Heart right ventricle (tissue), 16 donors: ENCODE measurements at regions of chr5 and their contacts with region 1.

Region 1: DNA sequence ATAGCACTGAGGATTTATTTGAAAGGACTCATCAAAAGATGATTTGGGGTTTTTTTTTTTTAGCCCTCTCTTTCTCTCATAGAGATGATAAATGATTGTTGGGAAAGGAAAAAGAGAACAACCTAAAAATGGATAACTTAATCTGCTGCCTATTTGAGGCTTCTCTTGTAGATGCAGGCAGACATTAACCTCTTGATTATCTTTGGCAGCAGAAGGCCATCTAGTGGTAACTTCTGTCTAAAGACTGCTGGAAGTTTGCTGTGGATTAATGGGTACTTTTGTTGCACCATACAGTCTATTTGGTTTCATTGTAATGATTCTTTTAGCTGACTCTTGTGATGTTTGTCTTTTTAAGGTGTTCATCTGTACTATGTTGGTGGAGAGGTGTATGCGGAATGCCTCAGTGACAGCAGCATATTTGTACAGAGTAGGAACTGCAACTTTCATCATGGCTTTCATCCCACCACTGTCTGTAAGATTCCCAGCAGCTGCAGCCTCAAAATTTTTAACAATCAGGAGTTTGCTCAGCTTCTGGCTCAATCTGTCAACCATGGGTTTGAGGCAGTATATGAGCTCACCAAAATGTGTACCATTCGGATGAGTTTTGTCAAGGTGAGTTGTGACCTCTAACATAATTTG is 18.8 kb downstream of the SMIM32 start:
- DNase-seq: no peak
- ATAC-seq: peak in 5 of 8 donors; percentile 44 to 70 (median 64)
- H3K4me3 ChIP-seq: no peak overlapping the region
- H3K27ac ChIP-seq: no peak overlapping the region
- H3K4me1 ChIP-seq: peaks cover 0 to 18% (median 0%) of the 10 kb centered on the region in 9 donors
- H3K27me3 ChIP-seq: no peaks in the 10 kb centered on the region
- CTCF ChIP-seq: peak; percentile 50 to 80 (median 64)

Region 2: GRCh38 chr5:135944967-135945560 is 229.1 kb before region 1 on chr5:
- intact Hi-C with region 1: loop called (anchors 2 to 10 kb)
- DNase-seq: peak in 1 of 2 donors; percentile 68
- ATAC-seq: peak in 5 of 8 donors; percentile 55 to 76 (median 68)
- H3K4me3 ChIP-seq: no peak overlapping the region
- H3K27ac ChIP-seq: no peak overlapping the region
- H3K4me1 ChIP-seq: peaks cover 0 to 8% (median 0%) of the 10 kb centered on the region in 9 donors
- H3K27me3 ChIP-seq: peaks cover 0 to 19% (median 0%) of the 10 kb centered on the region in 7 donors
- CTCF ChIP-seq: peak; percentile 67 to 89 (median 79)

Region 3: GRCh38 chr5:135977375-135977928 is 196.7 kb before region 1 on chr5:
- intact Hi-C with region 1: loop called in 1 of 10 experiments (anchors 10 kb)
- DNase-seq: peak; percentile 56 to 79
- ATAC-seq: peak; percentile 70 to 89 (median 79)
- H3K4me3 ChIP-seq: no peak overlapping the region
- H3K27ac ChIP-seq: peak overlapping the region in 4 of 10 donors; percentile 36 to 77 (median 56)
- H3K4me1 ChIP-seq: peaks cover 0 to 45% (median 30%) of the 10 kb centered on the region in 9 donors
- H3K27me3 ChIP-seq: peaks cover 0 to 18% (median 0%) of the 10 kb centered on the region in 7 donors
- CTCF ChIP-seq: peak; percentile 23 to 77 (median 60)

Region 4: GRCh38 chr5:136073714-136074529 is 100.2 kb before region 1 on chr5:
- intact Hi-C with region 1: loop called in 3 of 10 experiments (anchors 5 kb)
- DNase-seq: no peak
- ATAC-seq: no peak
- H3K4me3 ChIP-seq: no peak overlapping the region
- H3K27ac ChIP-seq: no peak overlapping the region
- H3K4me1 ChIP-seq: peaks cover 0 to 29% (median 14%) of the 10 kb centered on the region in 9 donors
- H3K27me3 ChIP-seq: peaks cover 0 to 7% (median 0%) of the 10 kb centered on the region in 7 donors
- CTCF ChIP-seq: no peak

Region 5: GRCh38 chr5:136080483-136081216 is 93.5 kb before region 1 on chr5:
- intact Hi-C with region 1: loop called in 8 of 10 experiments (anchors 5 to 10 kb)
- DNase-seq: peak; percentile 84 to 87
- ATAC-seq: peak; percentile 89 to 98 (median 93)
- H3K4me3 ChIP-seq: peak overlapping the region in 9 of 10 donors; percentile 23 to 51 (median 39)
- H3K27ac ChIP-seq: peak overlapping the region; percentile 65 to 88 (median 75)
- H3K4me1 ChIP-seq: peaks cover 0 to 46% (median 22%) of the 10 kb centered on the region in 9 donors
- H3K27me3 ChIP-seq: peaks cover 0 to 28% (median 0%) of the 10 kb centered on the region in 7 donors
- CTCF ChIP-seq: no peak

Region 6: DNA sequence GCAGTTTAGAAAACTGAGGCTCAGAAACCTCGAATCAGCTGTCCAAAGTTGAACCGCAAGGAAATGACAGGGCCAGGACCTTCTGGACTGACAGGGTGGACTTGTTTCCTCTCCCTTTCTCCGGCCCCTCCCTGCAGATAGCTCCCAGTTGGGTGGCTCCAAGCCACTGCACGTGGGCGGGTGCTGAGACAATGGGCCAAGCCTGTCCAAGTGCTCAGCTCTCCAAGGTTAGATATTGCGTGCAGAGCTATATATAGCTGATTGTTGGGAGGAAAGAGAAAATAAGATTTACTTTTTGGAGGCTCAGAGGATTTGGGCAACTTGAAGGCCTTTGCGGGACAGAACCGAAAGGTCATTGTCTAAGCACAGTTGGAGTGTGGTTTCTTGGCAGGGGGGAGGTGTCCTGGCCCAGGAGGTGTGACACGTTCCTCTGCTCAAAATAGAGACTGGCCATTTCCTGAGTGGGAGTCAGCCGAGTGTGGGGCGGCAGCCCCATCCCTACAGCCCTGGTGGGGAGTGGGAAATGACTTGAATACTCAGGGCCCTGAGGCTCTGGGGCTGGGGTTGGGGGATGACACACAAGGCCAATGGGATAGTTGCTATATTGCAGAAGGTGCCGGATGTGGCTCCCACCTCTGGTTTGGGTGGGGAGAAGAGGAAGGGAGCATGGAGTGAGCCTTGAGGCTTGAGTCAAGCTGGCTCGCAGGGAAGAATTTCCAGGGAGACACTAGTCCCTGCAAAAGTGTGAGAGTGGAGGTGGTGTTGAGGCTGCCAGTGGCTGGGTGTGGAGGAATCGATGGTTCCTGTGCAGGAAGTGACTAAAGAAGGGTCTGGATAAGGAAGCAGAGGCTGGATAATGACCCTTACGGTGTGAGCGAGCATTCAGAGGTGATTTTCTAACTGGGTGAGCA is 85.9 kb before region 1 on chr5:
- intact Hi-C with region 1: loop called in 7 of 10 experiments (anchors 5 to 10 kb)
- DNase-seq: peak; percentile 85 to 93
- ATAC-seq: peak; percentile 97 to 99 (median 98)
- H3K4me3 ChIP-seq: peak overlapping the region in 2 of 10 donors; percentile 18
- H3K27ac ChIP-seq: peak overlapping the region; percentile 81 to 95 (median 86)
- H3K4me1 ChIP-seq: peaks cover 7 to 63% (median 38%) of the 10 kb centered on the region in 9 donors
- H3K27me3 ChIP-seq: no peaks in the 10 kb centered on the region
- CTCF ChIP-seq: no peak

Region 7: GRCh38 chr5:136108180-136108611 is 65.9 kb before region 1 on chr5:
- intact Hi-C with region 1: no loop called
- DNase-seq: no peak
- ATAC-seq: no peak
- H3K4me3 ChIP-seq: no peak overlapping the region
- H3K27ac ChIP-seq: no peak overlapping the region
- H3K4me1 ChIP-seq: peaks cover 0 to 17% (median 6%) of the 10 kb centered on the region in 9 donors
- H3K27me3 ChIP-seq: no peaks in the 10 kb centered on the region
- CTCF ChIP-seq: no peak